Activated CD8-positive, alpha-beta T cell treated with anti-CD3 and anti-CD28 coated beads for 36 hours (primary cell): ENCODE measurements at regions of chr10 and their contacts with region 1.

Region 1: DNA sequence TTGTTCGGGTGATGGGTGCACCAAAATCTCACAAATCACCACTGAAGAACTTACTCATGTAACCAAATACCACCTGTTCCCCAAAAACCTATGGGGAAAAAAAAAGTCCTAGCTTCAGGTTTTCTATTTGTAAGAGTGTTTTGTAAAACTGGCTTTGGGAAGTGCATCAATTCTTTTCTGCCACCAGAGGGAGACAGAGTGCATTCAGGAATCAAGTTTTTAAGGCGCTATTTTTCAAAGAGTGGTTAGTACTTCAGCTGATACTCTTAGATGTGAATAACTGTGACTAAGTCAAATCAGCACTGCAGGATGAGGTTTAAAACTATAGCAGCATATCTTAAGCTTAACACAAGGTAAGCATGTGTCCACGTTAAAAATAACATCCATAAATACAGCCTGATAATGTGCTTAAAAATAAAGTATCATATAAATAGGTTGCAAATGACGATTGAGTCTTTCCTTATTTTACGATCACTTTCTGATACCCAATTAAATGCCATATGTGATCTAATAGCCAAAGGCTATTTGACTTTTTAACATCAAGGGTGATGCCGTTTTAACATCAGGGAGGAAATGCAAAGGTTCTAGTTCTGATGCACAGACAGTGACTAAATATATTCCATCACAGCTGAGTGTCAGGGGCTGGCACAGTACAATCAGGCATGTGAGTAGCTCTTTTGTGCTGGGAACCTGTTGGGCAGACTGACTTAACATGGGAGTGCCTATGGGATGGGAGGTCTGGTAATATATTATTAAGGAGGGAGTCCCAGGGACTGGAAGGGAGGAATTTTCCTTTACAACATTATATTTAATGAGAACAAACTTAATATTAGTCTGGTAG is 10.6 kb upstream of the LYZL2 start:
- DNase-seq: peak; percentile 33
- ATAC-seq: peak; percentile 26
- H3K4me3 Mint-ChIP-seq: no peak overlapping the region
- H3K27ac Mint-ChIP-seq: no peak overlapping the region
- H3K4me1 Mint-ChIP-seq: peaks cover 4% of the 10 kb centered on the region
- H3K27me3 Mint-ChIP-seq: peaks cover 28% of the 10 kb centered on the region
- CTCF ChIP-seq: peak; percentile 88

Region 2: GRCh38 chr10:30510169-30510930 is 129.8 kb before region 1 on chr10:
- CTCF ChIA-PET with region 1: no interaction called
- POLR2A ChIA-PET with region 1: no interaction called
- intact Hi-C with region 1: no loop called
- DNase-seq: peak; percentile 73
- ATAC-seq: peak; percentile 95
- H3K4me3 Mint-ChIP-seq: no peak overlapping the region
- H3K27ac Mint-ChIP-seq: peak overlapping the region; percentile 13
- H3K4me1 Mint-ChIP-seq: peaks cover 24% of the 10 kb centered on the region
- H3K27me3 Mint-ChIP-seq: no peaks in the 10 kb centered on the region
- CTCF ChIP-seq: no peak

Region 3: GRCh38 chr10:30656233-30656632 is 16.1 kb after region 1 on chr10:
- CTCF ChIA-PET with region 1: interaction called, 33 read pairs
- POLR2A ChIA-PET with region 1: no interaction called
- intact Hi-C with region 1: no loop called
- DNase-seq: no peak
- ATAC-seq: no peak
- H3K4me3 Mint-ChIP-seq: no peak overlapping the region
- H3K27ac Mint-ChIP-seq: no peak overlapping the region
- H3K4me1 Mint-ChIP-seq: no peaks in the 10 kb centered on the region
- H3K27me3 Mint-ChIP-seq: peaks cover 35% of the 10 kb centered on the region
- CTCF ChIP-seq: no peak

Region 4: DNA sequence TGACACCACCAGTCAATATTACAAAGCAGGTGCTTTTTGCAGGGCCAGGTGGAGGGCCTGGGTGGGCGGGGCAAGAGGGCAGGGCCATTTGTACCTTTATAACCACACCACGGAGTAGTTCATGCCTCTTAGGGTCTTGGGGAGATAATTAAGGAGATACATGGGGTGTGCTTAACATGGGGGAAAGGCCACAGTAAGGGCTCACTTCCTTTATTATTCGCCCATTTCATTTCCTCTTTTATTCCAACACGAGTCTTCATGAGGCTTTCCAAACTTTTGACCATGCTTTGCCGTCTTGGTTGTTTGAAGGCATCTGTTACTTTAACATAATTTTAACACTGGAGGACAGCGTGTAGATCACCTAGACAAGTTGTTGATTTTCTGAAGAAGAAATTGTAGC is 22.6 kb after region 1 on chr10:
- CTCF ChIA-PET with region 1: interaction called, 14 read pairs
- POLR2A ChIA-PET with region 1: no interaction called
- intact Hi-C with region 1: no loop called
- DNase-seq: no peak
- ATAC-seq: no peak
- H3K4me3 Mint-ChIP-seq: no peak overlapping the region
- H3K27ac Mint-ChIP-seq: no peak overlapping the region
- H3K4me1 Mint-ChIP-seq: no peaks in the 10 kb centered on the region
- H3K27me3 Mint-ChIP-seq: peaks cover 15% of the 10 kb centered on the region
- CTCF ChIP-seq: no peak